Head of caudate nucleus (tissue), 42 donors: ENCODE measurements at regions of chr13 and their contacts with region 1.

Region 1: GRCh38 chr13:44583137-44583536 is 7.0 kb upstream of the TSC22D1 start:
- DNase-seq: no peak

Region 2: DNA sequence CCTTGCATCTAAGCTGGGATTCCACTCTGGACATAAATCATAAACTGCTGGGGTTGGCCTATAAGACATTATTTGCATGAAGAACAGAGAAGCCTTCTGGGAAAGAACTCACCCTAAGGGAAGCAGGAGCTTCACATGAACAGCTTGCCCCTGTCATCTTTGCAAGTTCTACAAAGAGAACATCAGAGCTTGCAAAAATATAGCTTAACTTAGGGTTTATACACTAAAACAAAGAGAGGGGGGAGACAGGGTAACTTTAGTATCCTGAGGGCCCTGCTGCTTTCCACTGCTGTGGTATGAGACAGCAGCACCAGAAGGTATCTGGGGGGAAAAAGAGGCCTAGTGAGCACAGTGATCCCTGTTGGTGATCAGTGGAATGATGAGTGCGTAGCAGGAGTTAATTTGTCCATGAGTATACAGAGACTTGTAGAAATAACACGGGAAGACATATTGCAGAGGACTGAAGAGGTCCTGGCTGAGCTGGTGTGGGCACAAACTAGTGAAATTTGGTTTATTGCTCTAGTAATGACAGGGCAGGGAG is 109.1 kb after region 1 on chr13:
- intact Hi-C with region 1: loop called (anchors 10 kb)
- DNase-seq: no peak